Thyroid gland (tissue), 4 donors: ENCODE measurements at regions of chr1 and their contacts with region 1.

Region 1: GRCh38 chr1:54996359-54996868 is 2.3 kb upstream of the BSND start:
- DNase-seq: peak; percentile 51 to 74
- H3K4me3 ChIP-seq: no peak overlapping the region
- H3K27ac ChIP-seq: no peak overlapping the region
- H3K4me1 ChIP-seq: peaks cover 0 to 9% of the 10 kb centered on the region in 2 donors
- H3K27me3 ChIP-seq: peaks cover 5% of the 10 kb centered on the region
- CTCF ChIP-seq: peak; percentile 52 to 86 (median 66)
- POLR2A ChIP-seq: no peak

Region 2: GRCh38 chr1:54950369-54951163 is 45.8 kb before region 1 on chr1:
- intact Hi-C with region 1: loop called (anchors 2 kb)
- DNase-seq: peak; percentile 60 to 74
- H3K4me3 ChIP-seq: no peak overlapping the region
- H3K27ac ChIP-seq: no peak overlapping the region
- H3K4me1 ChIP-seq: peaks cover 0 to 12% of the 10 kb centered on the region in 2 donors
- H3K27me3 ChIP-seq: no peaks in the 10 kb centered on the region
- CTCF ChIP-seq: peak; percentile 44 to 81 (median 68)
- POLR2A ChIP-seq: no peak